CD14-positive monocyte (primary cell): ENCODE measurements at regions of chr19 and their contacts with region 1.

Region 1: GRCh38 chr19:32971715-32972540 is at the starts of genes CEP89 and FAAP24:
- DNase-seq: peak; percentile 99 to 100 (median 99)
- H3K4me3 ChIP-seq: peak within 1 kb of the TSS; percentile 53 to 96 (median 80)
- H3K4me3 Mint-ChIP-seq: peak within 1 kb of the TSS; percentile 97 to 98
- H3K27ac ChIP-seq: peak within 1 kb of the TSS; percentile 51 to 88
- H3K27ac Mint-ChIP-seq: peak within 1 kb of the TSS; percentile 85 to 99 (median 97)
- H3K4me1 ChIP-seq: peaks cover 14 to 22% of the 10 kb centered on the region in 2 donors
- H3K4me1 Mint-ChIP-seq: peaks cover 13% of the 10 kb centered on the region
- H3K27me3 ChIP-seq: no peaks in the 10 kb centered on the region
- H3K27me3 Mint-ChIP-seq: no peaks in the 10 kb centered on the region
- CTCF ChIP-seq: no peak
- polyA plus RNA-seq, gene CEP89: 4.6 to 6.5 (median 4.7) TPM
- polyA plus RNA-seq, gene FAAP24: 0.61 to 4.2 (median 2.3) TPM

Region 2: DNA sequence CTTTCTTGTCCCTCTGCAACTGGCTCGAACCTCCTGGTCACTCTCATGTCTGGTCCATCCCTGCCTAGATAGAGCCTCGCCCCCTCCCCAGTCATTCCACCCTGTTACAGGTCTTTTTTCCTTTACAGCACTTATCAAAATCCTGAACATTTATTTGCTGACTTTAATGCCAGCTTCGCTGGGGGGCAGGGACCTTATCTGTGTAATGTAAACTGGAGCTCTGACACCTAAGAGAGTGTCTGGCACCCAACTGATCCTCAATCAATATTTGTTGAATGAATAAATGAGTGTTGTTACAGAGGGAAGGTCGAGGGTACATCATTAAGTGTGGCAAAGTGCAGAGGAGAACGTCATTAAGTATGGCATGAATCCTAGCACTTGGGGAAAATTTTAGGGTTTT is 16.8 kb after region 1 on chr19:
- intact Hi-C with region 1: no loop called
- DNase-seq: no peak
- H3K4me3 ChIP-seq: no peak overlapping the region
- H3K4me3 Mint-ChIP-seq: no peak overlapping the region
- H3K27ac ChIP-seq: no peak overlapping the region
- H3K27ac Mint-ChIP-seq: no peak overlapping the region
- H3K4me1 ChIP-seq: peaks cover 0 to 5% of the 10 kb centered on the region in 2 donors
- H3K4me1 Mint-ChIP-seq: peaks cover 7% of the 10 kb centered on the region
- H3K27me3 ChIP-seq: no peaks in the 10 kb centered on the region
- H3K27me3 Mint-ChIP-seq: peaks cover 2 to 7% (median 3%) of the 10 kb centered on the region in 3 donors
- CTCF ChIP-seq: no peak

Region 3: GRCh38 chr19:33040994-33041827 is 69.3 kb after region 1 on chr19:
- intact Hi-C with region 1: no loop called
- DNase-seq: no peak
- H3K4me3 ChIP-seq: no peak overlapping the region
- H3K4me3 Mint-ChIP-seq: no peak overlapping the region
- H3K27ac ChIP-seq: no peak overlapping the region
- H3K27ac Mint-ChIP-seq: no peak overlapping the region
- H3K4me1 ChIP-seq: no peaks in the 10 kb centered on the region
- H3K4me1 Mint-ChIP-seq: peaks cover 8% of the 10 kb centered on the region
- H3K27me3 ChIP-seq: peaks cover 0 to 4% of the 10 kb centered on the region in 2 donors
- H3K27me3 Mint-ChIP-seq: peaks cover 14 to 42% (median 22%) of the 10 kb centered on the region in 3 donors
- CTCF ChIP-seq: no peak

Region 4: DNA sequence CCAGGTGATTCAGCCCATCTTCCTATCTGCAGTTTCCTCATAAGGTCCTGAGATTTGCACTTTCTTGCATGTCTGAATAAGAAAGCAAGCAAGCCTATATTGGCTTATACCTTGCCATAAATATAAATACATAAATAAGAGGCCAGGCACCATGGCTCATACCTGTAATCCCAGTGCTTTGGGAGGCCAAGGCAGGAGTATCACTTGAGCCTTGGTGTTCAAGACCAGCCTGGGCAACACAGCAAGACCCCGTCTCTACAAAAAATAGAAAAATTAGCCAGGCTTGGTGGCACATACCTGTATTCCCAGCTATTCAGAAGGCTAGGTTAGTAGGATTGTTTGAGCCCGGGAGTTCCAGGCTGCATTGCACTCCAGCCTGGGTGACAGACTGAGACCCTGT is 103.6 kb after region 1 on chr19:
- intact Hi-C with region 1: loop called (anchors 5 to 10 kb)
- DNase-seq: no peak
- H3K4me3 ChIP-seq: no peak overlapping the region
- H3K4me3 Mint-ChIP-seq: no peak overlapping the region
- H3K27ac ChIP-seq: no peak overlapping the region
- H3K27ac Mint-ChIP-seq: no peak overlapping the region
- H3K4me1 ChIP-seq: peaks cover 4 to 7% of the 10 kb centered on the region in 2 donors
- H3K4me1 Mint-ChIP-seq: peaks cover 7% of the 10 kb centered on the region
- H3K27me3 ChIP-seq: no peaks in the 10 kb centered on the region
- H3K27me3 Mint-ChIP-seq: peaks cover 15 to 28% (median 18%) of the 10 kb centered on the region in 3 donors
- CTCF ChIP-seq: no peak

Region 5: GRCh38 chr19:33080761-33081681 is 109.1 kb after region 1 on chr19 and contains the start of gene GPATCH1:
- intact Hi-C with region 1: loop called (anchors 5 to 10 kb)
- DNase-seq: peak; percentile 66 to 81 (median 70)
- H3K4me3 ChIP-seq: peak within 1 kb of the TSS; percentile 88 to 97 (median 89)
- H3K4me3 Mint-ChIP-seq: peak within 1 kb of the TSS; percentile 93 to 94
- H3K27ac ChIP-seq: peak within 1 kb of the TSS in 1 of 2 donors; percentile 80
- H3K27ac Mint-ChIP-seq: peak within 1 kb of the TSS; percentile 87 to 95 (median 94)
- H3K4me1 ChIP-seq: peaks cover 14 to 26% of the 10 kb centered on the region in 2 donors
- H3K4me1 Mint-ChIP-seq: peaks cover 23% of the 10 kb centered on the region
- H3K27me3 ChIP-seq: no peaks in the 10 kb centered on the region
- H3K27me3 Mint-ChIP-seq: peaks cover 11 to 16% (median 11%) of the 10 kb centered on the region in 3 donors
- CTCF ChIP-seq: no peak
- polyA plus RNA-seq, gene GPATCH1: 1.4 to 6.8 (median 4.0) TPM

Region 6: GRCh38 chr19:34428549-34429285 is 1456.8 kb after region 1 on chr19:
- intact Hi-C with region 1: loop called in 1 of 2 experiments (anchors 10 kb)
- DNase-seq: peak; percentile 35 to 51 (median 42)
- H3K4me3 ChIP-seq: peak overlapping the region; percentile 62 to 92 (median 90)
- H3K4me3 Mint-ChIP-seq: peak overlapping the region; percentile 95 to 96
- H3K27ac ChIP-seq: peak overlapping the region; percentile 33 to 81
- H3K27ac Mint-ChIP-seq: peak overlapping the region; percentile 89 to 96 (median 92)
- H3K4me1 ChIP-seq: peaks cover 18 to 31% of the 10 kb centered on the region in 2 donors
- H3K4me1 Mint-ChIP-seq: peaks cover 24% of the 10 kb centered on the region
- H3K27me3 ChIP-seq: no peaks in the 10 kb centered on the region
- H3K27me3 Mint-ChIP-seq: peaks cover 0 to 2% (median 0%) of the 10 kb centered on the region in 3 donors
- CTCF ChIP-seq: no peak